ENCODE measurements at regions of chr1 and their contacts with region 1.

Region 1: GRCh38 chr1:29136391-29136915 is 12.8 kb upstream of the TMEM200B start:
- DNase-seq: no peak
- H3K27ac ChIP-seq: no peak overlapping the region
- CTCF ChIP-seq: no peak

Region 2: GRCh38 chr1:29120961-29121485 is 15.4 kb before region 1 on chr1:
- CTCF ChIA-PET with region 1: interaction called, 6 read pairs
- POLR2A ChIA-PET with region 1: interaction called, 11 read pairs
- DNase-seq: no peak
- H3K27ac ChIP-seq: no peak overlapping the region
- CTCF ChIP-seq: no peak

Measured in RWPE1 (cell line).